ENCODE measurements at regions of chr11 and their contacts with region 1.

Region 1: GRCh38 chr11:65117216-65118096 is at the start of gene ZNHIT2:
- DNase-seq: peak; percentile 94
- H3K4me3 ChIP-seq: peak within 1 kb of the TSS; percentile 74 to 86
- H3K27ac ChIP-seq: peak within 1 kb of the TSS; percentile 67 to 89
- H3K4me1 ChIP-seq: peaks cover 22 to 51% of the 10 kb centered on the region in 2 experiments; a peak in 3 of 4 replicates
- H3K27me3 ChIP-seq: no peaks in the 10 kb centered on the region
- CTCF ChIP-seq: peak; percentile 90
- EP300 ChIP-seq: 0 out of 4 replicates have a peak, but pooled peaks of 1 of the 2 experiments have one; percentile 18
- RAD21 ChIP-seq: peak; percentile 84
- polyA plus RNA-seq, gene ZNHIT2: 5.6 and 5.9 TPM in 2 replicates

Region 2: GRCh38 chr11:65095974-65096806 is 21.3 kb before region 1 on chr11 and contains the start of gene VPS51:
- CTCF ChIA-PET with region 1: interaction called, 150 read pairs
- POLR2A ChIA-PET with region 1: interaction called, 27 read pairs
- DNase-seq: peak; percentile 93
- H3K4me3 ChIP-seq: peak within 1 kb of the TSS; percentile 57 to 77
- H3K27ac ChIP-seq: peak within 1 kb of the TSS; percentile 71 to 74; a peak in 3 of 4 replicates
- H3K4me1 ChIP-seq: peaks cover 0 to 10% of the 10 kb centered on the region in 2 experiments; a peak in 1 of 4 replicates
- H3K27me3 ChIP-seq: no peaks in the 10 kb centered on the region
- CTCF ChIP-seq: no peak
- EP300 ChIP-seq: peak in 1 of 2 experiments; percentile 39; a peak in 1 of 4 replicates
- RAD21 ChIP-seq: no peak
- polyA plus RNA-seq, gene VPS51: 59.1 and 59.9 TPM in 2 replicates

Region 3: DNA sequence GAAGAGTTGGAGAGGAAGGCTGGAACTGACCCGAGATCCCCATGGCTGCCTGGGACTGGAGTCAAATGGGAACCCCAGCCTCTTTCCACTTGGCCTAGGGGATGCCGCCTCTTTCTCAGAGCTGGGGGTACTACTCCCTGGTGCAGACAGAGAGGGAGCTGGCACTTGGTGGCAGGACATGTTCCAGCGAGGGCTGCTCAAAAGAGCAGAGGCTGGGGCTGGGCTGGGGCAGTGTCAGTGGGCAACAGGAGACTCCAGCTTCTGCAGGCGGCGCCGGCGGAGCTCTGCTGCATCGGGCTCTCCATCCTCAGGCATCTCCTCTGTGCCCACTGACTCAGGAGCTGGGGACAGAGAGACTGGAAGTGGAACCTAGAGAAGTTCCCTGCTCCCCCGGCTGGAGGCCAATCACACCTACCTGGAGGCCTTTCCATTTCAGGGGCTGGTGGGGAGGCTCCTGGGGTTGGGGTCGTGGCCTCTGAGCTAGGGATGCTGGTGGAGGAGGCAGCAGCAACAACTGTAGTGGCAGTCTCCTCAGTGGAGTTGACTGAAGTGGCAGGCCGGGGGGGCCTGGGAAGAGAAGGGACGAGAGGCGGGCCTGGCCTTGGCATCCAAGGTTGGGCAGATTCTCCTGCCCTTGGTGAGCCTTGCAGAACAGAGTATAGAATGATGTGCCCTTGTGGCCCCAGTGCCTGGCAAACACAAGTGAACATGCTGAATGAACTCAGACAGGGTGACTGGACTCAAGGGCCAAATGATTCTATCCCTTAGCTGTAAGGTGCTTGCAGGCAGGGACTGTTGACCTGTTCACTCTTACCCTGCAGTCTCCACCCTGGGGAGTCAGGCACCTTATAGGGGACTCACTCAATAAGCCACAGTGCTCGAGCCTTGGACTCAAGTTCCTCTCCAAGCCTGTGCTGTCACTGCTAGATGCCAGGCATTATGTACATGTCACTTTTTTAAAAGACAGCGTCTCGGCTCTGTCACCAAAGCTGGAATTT is 11.0 kb after region 1 on chr11:
- CTCF ChIA-PET with region 1: interaction called, 23 read pairs
- POLR2A ChIA-PET with region 1: interaction called, 20 read pairs
- DNase-seq: no peak
- H3K4me3 ChIP-seq: no peak overlapping the region
- H3K27ac ChIP-seq: no peak overlapping the region
- H3K4me1 ChIP-seq: peaks cover 0 to 15% of the 10 kb centered on the region in 2 experiments; a peak in 2 of 4 replicates
- H3K27me3 ChIP-seq: no peaks in the 10 kb centered on the region
- CTCF ChIP-seq: no peak
- EP300 ChIP-seq: no peak
- RAD21 ChIP-seq: no peak

Region 4: GRCh38 chr11:65134386-65135253 is 17.2 kb after region 1 on chr11 and contains the start of gene SYVN1:
- CTCF ChIA-PET with region 1: interaction called, 27 read pairs
- POLR2A ChIA-PET with region 1: interaction called, 25 read pairs
- DNase-seq: peak; percentile 97
- H3K4me3 ChIP-seq: peak within 1 kb of the TSS; percentile 88 to 96
- H3K27ac ChIP-seq: peak within 1 kb of the TSS; percentile 95 to 99
- H3K4me1 ChIP-seq: peaks cover 0 to 28% of the 10 kb centered on the region in 2 experiments; a peak in 2 of 4 replicates
- H3K27me3 ChIP-seq: no peaks in the 10 kb centered on the region
- CTCF ChIP-seq: no peak
- EP300 ChIP-seq: 0 out of 4 replicates have a peak, but pooled peaks of 1 of the 2 experiments have one; percentile 5
- RAD21 ChIP-seq: no peak
- polyA plus RNA-seq, gene SYVN1: 14.9 and 31.9 TPM in 2 replicates

Region 5: DNA sequence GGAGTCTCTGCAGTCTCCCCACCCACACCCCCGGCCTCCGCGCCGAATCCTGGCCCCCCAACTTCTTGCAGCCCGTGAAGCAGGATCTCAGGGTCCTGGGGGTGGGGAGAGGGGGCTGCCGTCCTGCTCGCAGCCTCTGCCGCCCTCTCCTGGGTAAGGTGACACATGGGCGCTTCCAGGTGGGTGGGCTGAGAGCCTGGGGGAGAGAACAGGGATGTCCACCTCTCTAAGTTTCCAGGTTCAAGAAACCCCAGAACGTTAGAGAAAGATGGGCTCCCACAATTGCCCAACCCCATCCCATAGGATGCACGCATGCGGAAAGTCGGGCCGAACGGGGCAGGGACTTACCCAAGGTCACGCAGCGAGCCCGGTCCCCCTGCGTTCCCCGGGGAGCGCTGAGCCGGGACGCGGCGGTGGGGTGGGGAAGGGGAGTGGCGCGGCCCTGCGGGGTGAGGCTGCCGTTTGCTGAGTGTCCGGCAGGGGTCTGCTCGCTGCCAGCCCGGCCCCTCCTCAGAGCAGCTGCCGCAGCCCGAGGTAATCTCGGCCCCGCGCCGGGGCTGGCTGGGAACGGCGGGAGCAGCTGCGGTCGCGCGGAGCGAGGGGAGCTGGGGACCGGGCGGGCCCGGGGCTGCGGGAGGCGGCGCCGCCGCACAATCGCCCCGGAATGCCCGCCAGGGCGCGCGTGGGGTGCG is 63.6 kb after region 1 on chr11:
- CTCF ChIA-PET with region 1: interaction called, 46 read pairs
- POLR2A ChIA-PET with region 1: interaction called, 12 read pairs
- DNase-seq: peak; percentile 96
- H3K4me3 ChIP-seq: peak overlapping the region; percentile 95 to 98
- H3K27ac ChIP-seq: peak overlapping the region in 1 of 2 experiments; percentile 75; a peak in 2 of 4 replicates
- H3K4me1 ChIP-seq: peaks cover 0 to 18% of the 10 kb centered on the region in 2 experiments; a peak in 2 of 4 replicates
- H3K27me3 ChIP-seq: no peaks in the 10 kb centered on the region
- CTCF ChIP-seq: peak; percentile 53
- EP300 ChIP-seq: no peak
- RAD21 ChIP-seq: peak; percentile 62

Region 6: DNA sequence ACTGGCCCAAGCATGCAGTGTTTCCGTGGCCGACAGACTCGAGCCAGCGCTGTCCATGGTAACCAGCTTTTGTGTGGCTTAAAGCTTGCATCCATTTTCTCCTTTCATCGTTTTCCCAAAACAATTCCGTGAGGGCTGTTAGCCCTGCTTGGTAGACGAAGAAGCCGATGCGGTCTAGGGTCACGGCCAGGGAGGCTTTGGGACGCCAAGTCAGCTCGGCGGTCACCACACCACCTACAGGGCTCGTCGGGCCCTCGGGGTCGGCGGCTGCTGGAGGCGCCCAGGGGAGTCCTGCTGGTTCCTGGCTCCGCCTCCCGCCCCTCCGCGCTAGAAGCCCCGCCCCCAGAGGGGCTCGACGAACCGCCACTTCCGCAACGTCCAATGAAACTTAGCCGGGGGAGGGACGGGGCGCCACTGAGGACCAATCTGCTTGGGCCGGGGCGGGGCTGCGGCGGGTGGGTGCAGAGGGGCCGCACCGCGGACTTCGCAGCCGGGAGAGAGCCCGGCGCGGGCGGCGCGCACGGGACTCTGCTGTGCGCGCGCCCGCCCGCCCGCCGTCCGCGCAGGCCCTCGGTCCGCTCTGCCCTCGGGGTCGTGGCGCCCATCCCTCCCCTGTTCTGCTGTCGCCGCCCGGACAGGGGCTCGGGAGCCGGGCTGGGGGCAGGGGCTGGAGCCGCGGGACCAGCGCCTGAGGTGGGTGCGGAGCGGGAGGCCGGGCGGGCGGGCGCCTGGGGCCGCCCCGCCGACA is 237.0 kb after region 1 on chr11 and contains the start of gene TIGD3:
- CTCF ChIA-PET with region 1: no interaction called
- POLR2A ChIA-PET with region 1: no interaction called
- DNase-seq: peak; percentile 99
- H3K4me3 ChIP-seq: peak within 1 kb of the TSS; percentile 71 to 74
- H3K27ac ChIP-seq: peak within 1 kb of the TSS; percentile 34 to 83
- H3K4me1 ChIP-seq: peaks cover 0 to 20% of the 10 kb centered on the region in 2 experiments; a peak in 1 of 4 replicates
- H3K27me3 ChIP-seq: no peaks in the 10 kb centered on the region
- CTCF ChIP-seq: 0 out of 2 replicates have a peak, but pooled peaks have one; percentile 13
- EP300 ChIP-seq: no peak
- RAD21 ChIP-seq: no peak
- polyA plus RNA-seq, gene TIGD3: 0.34 and 0.41 TPM in 2 replicates